ENCODE measurements at regions of chr1 and their contacts with region 1.

Region 1: GRCh38 chr1:183956559-183957188 is 80.9 kb downstream of the COLGALT2 start:
- DNase-seq: no peak
- ATAC-seq: peak; percentile 99
- H3K4me3 Mint-ChIP-seq: peak overlapping the region; percentile 26
- H3K27ac Mint-ChIP-seq: peak overlapping the region; percentile 79
- H3K4me1 Mint-ChIP-seq: no peaks in the 10 kb centered on the region
- H3K27me3 Mint-ChIP-seq: peaks cover 5% of the 10 kb centered on the region
- CTCF ChIP-seq: no peak

Region 2: DNA sequence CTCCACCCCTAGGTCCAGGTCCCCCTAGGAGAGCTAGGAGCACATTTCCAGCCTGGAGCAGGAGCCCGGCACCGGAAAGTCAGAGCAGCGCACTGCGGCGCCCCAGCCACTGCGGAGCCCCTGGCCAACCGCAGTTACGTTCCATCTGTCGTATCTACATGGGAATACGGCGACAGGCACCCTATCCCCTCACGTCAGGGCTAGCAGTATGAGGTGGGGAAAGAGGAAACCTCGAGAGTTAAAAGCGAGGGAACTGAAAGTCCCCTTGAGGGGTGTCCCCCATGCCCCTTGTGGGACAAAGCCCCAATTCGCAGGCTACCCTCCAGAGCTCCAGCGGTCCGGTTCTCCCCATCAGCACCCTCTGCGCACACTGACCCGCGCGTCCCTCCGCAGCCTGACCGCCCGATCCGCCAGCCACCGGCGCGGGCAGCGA is 79.9 kb after region 1 on chr1:
- CTCF ChIA-PET with region 1: no interaction called
- POLR2A ChIA-PET with region 1: interaction called, 3 read pairs
- intact Hi-C with region 1: loop called (anchors 5 kb)
- DNase-seq: peak; percentile 17
- ATAC-seq: peak; percentile 25
- H3K4me3 Mint-ChIP-seq: peak overlapping the region; percentile 53
- H3K27ac Mint-ChIP-seq: no peak overlapping the region
- H3K4me1 Mint-ChIP-seq: peaks cover 16% of the 10 kb centered on the region
- H3K27me3 Mint-ChIP-seq: peaks cover 51% of the 10 kb centered on the region
- CTCF ChIP-seq: no peak

Region 3: DNA sequence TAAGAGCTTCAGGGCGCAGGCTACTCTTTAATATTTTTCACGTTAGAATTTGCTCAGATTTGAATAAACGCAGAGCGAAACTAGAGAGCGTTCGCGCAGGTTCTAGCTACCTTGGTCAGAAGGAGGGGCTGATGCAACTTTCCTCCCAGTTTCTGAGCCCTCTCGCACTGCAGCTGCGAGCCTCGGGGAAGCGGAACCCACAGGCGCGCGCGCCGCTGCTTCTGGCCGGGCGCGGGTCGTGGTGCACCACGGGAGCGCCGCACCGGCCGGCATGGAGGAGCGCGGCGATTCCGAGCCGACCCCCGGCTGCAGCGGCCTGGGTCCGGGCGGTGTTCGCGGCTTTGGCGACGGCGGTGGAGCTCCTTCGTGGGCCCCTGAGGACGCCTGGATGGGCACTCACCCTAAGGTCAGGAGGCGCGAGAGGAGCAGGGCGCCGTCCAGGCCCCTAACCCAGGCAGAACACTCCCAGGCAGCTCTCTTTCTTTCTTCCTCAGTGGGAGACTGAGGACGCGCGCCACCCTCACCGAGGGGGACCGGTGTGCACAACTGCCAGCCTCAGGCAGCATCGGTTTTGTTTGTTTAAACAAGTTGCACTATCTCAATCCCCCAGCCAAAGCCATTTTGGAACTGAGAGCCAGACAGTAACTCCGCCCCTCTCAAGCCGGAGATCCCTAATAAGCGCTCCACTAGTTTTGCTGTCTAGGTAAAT is 95.0 kb after region 1 on chr1 and contains the start of gene TSEN15:
- CTCF ChIA-PET with region 1: no interaction called
- POLR2A ChIA-PET with region 1: interaction called, 5 read pairs
- intact Hi-C with region 1: loop called (anchors 1 kb)
- DNase-seq: peak; percentile 76
- ATAC-seq: peak; percentile 95
- H3K4me3 Mint-ChIP-seq: peak within 1 kb of the TSS; percentile 98
- H3K27ac Mint-ChIP-seq: peak within 1 kb of the TSS; percentile 98
- H3K4me1 Mint-ChIP-seq: peaks cover 36% of the 10 kb centered on the region
- H3K27me3 Mint-ChIP-seq: peaks cover 26% of the 10 kb centered on the region
- CTCF ChIP-seq: no peak
- total RNA-seq, gene TSEN15: 60.8 and 61.2 TPM in 2 replicates

Region 4: GRCh38 chr1:184222652-184223052 is 266.0 kb after region 1 on chr1:
- CTCF ChIA-PET with region 1: no interaction called
- POLR2A ChIA-PET with region 1: no interaction called
- intact Hi-C with region 1: loop called (anchors 1 kb)
- DNase-seq: no peak
- ATAC-seq: no peak
- H3K4me3 Mint-ChIP-seq: no peak overlapping the region
- H3K27ac Mint-ChIP-seq: no peak overlapping the region
- H3K4me1 Mint-ChIP-seq: no peaks in the 10 kb centered on the region
- H3K27me3 Mint-ChIP-seq: no peaks in the 10 kb centered on the region
- CTCF ChIP-seq: no peak

Measured in activated B cell treated with CpG ODN at 0.5 μM for 24 hours (primary cell).